ENCODE measurements at regions of chr17 and their contacts with region 1.

Region 1: DNA sequence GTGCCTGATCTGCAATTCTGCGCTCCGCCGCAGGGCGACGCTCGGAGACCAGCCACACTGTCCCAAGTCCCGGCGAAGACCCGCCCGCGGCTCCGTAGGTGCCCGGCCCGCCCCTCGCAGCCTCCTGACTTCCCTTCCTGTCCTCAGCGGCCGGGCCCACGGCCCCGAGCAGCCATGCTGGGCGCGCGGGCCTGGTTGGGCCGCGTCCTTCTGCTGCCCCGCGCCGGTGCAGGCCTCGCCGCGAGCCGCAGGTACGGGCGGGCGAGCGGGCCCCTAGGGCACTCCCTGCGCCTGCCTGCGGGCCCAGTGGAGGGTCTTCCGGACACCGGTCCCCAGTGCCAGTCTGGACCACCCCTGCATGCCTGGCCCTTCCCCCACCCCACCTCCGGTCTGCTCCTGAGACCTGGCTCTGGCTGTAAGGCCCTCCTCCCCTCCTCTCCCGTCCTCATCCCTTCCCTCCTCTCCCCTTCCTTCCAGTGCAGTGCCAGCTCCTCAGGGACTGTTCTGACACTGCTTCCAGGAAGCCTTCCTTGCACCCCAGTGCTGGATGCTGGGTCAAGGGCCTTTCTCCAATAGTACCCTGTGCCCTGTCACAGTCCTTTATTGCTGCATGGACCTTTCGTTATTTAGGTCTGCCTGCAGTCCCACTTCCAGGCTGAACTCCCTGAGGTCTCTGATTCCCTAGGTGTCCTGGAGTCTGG is at the start of gene SPATA20:
- DNase-seq: peak; percentile 72 to 97
- H3K4me3 ChIP-seq: peak within 1 kb of the TSS; percentile 69 to 76
- H3K27ac ChIP-seq: peak within 1 kb of the TSS; percentile 65 to 80
- H3K4me1 ChIP-seq: peaks cover 3 to 16% of the 10 kb centered on the region in 2 donors
- H3K27me3 ChIP-seq: no peaks in the 10 kb centered on the region
- CTCF ChIP-seq: peak; percentile 99
- total RNA-seq, gene SPATA20: 463 TPM

Region 2: DNA sequence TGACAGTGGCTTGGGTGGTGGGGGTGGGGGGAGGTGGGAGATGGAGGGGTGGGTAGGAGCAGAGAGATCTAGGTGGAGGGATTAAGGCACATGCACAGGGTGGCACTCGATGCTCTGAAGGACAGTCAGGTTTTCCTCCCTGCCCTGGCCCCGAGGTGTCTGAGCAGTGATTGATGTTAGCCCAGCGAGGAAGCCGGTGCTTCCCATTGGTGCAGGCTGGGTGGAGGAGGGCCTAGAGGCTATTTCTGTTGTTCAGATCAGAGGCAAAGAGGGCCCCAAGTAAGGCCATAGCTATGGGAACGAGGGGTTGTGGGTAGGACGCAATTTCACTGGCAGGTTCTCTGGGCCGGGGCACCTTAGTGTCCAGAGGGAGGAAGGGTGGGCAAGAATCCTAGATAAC is 36.5 kb after region 1 on chr17:
- intact Hi-C with region 1: no loop called
- DNase-seq: no peak
- H3K4me3 ChIP-seq: no peak overlapping the region
- H3K27ac ChIP-seq: no peak overlapping the region
- H3K4me1 ChIP-seq: peaks cover 0 to 1% of the 10 kb centered on the region in 2 donors
- H3K27me3 ChIP-seq: peaks cover 4% of the 10 kb centered on the region
- CTCF ChIP-seq: no peak

Region 3: DNA sequence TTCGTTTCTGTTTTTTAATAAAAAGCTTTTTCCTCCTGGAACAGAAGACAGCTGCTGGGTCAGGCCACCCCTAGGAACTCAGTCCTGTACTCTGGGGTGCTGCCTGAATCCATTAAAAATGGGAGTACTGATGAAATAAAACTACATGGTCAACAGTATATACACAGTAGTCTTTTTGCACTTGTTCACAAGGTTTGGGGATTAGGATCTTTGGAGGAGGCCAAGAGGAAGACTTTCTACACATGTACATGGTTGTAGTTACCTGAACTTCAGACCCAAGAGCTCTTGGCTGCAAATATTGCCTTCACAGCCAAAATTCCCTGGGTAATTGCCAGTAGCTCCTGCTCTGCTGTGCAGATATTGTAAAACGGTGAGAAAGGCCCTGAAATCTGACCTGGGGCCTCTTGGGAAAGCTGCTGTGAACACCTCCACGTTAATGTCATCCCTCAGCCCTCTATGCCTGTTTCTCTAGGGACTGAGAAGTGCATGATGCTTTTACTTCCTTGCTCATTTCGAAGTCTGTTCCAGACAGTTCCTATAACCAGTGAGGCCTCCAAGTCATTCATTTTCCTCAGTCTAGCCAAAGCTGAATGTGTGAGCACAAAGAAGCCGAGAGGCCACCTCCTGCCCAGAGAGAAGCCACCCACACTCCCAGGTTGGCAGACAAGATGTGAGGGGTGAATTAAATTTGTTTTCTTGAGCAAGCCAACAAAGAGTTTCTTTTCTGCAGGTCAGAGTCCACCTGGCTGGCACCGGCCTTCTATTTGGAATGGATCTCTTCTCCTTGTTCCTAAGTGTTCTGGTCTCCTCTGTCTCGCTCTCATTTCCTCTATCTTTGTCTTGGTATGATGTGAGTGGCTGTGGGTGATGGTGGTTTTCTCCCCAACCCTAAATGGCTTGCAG is 144.6 kb after region 1 on chr17:
- intact Hi-C with region 1: loop called (anchors 2 kb)
- DNase-seq: no peak
- H3K4me3 ChIP-seq: no peak overlapping the region
- H3K27ac ChIP-seq: peak overlapping the region; percentile 8 to 54
- H3K4me1 ChIP-seq: peaks cover 17 to 45% of the 10 kb centered on the region in 2 donors
- H3K27me3 ChIP-seq: no peaks in the 10 kb centered on the region
- CTCF ChIP-seq: no peak